Activated T-helper 2 cell treated with anti-CD3 and anti-CD28 coated beads, Interferon-gamma antibody, Interleukin-2, Interleukin-4, amounts not matched to agents 10 μg/mL and 5 μg/mL and 100 μg/mL, durations not matched to agents 14 hours and 24 hours and 36 hours (primary cell): ENCODE measurements at regions of chr5 and their contacts with region 1.

Region 1: DNA sequence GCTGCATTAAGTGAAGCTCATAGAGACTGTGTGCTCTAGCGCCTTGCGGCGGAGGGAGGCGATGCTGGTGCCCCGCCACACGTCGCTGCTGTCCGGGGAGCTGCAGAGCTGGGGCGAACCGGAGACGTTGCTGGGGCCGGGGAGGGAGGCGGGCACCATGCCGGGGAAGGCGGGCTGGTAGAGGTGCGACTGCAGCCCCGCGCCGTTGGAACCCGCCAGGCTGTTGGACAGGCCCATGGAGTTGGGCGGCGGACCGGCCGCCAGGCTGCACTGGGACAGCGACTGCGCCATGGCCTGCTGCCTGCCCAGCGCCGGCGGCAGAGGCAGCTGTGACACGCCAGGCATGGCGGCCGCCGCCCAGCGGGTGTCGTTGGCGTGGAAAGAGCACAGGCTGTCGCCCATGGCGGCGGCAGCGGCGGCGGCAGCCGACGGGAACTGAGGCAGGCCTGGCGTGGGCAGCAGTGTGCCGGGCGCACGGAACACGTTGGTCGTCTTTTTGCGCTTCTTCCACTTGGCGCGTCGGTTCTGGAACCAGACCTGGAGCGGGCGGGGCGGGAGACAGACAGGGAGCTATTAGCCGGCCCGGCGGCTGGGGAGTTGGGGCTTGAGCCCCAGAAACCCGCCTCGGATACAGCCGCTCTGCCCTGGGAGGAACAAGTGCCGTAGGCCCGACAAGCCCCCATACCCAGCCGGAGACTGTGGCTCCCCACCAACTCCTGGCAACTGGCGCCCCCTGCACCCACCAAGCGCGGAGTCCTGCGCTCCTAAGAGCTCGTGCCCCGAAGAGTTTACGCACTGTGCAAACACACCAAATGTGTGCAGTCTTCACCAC is 8.0 kb downstream of the OTP start:
- DNase-seq: peak; percentile 49
- H3K4me3 Mint-ChIP-seq: peak overlapping the region; percentile 75
- H3K27ac Mint-ChIP-seq: no peak overlapping the region
- H3K4me1 Mint-ChIP-seq: peaks cover 12% of the 10 kb centered on the region
- H3K27me3 Mint-ChIP-seq: peaks cover 72% of the 10 kb centered on the region

Region 2: DNA sequence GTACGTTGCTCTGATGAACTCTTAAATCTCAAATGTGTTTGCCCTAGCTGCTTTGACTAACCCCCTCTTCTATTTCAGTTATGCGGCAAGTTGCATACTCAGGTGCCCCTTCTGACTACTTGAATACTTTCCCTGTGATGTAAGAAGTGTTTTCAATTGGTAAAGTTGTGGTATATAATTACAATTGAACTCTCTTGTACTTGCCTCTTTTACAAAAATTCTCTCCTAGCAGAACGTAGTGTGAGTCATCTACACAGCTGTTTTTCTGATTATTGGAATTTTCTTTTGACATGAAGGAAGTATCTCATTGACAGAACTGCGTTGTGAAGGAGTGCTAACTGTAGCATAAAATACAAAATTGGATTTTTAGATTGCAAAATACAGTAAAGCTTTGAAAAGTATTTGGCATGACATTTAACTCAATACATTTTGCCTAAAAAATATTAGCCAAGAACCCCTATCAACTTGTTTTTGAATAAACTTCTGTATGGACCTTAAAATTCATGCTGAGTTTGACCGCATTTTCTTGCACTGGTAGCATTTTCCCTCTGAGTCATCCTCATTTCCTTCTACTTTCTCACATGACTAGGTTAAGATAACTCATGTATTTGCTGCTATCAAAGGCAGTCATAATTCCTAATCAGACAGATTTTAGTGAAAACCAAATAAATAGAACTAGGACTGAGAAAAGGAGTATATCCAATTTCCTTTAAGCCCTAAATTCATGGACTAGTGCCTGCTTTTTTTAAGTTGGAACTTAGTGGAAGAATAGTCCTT is 671.3 kb before region 1 on chr5:
- intact Hi-C with region 1: loop called (anchors 10 kb)
- DNase-seq: no peak
- H3K4me3 Mint-ChIP-seq: no peak overlapping the region
- H3K27ac Mint-ChIP-seq: no peak overlapping the region
- H3K4me1 Mint-ChIP-seq: peaks cover 18% of the 10 kb centered on the region
- H3K27me3 Mint-ChIP-seq: peaks cover 47% of the 10 kb centered on the region